ENCODE measurements at regions of chr2 and their contacts with region 1.

Region 1: DNA sequence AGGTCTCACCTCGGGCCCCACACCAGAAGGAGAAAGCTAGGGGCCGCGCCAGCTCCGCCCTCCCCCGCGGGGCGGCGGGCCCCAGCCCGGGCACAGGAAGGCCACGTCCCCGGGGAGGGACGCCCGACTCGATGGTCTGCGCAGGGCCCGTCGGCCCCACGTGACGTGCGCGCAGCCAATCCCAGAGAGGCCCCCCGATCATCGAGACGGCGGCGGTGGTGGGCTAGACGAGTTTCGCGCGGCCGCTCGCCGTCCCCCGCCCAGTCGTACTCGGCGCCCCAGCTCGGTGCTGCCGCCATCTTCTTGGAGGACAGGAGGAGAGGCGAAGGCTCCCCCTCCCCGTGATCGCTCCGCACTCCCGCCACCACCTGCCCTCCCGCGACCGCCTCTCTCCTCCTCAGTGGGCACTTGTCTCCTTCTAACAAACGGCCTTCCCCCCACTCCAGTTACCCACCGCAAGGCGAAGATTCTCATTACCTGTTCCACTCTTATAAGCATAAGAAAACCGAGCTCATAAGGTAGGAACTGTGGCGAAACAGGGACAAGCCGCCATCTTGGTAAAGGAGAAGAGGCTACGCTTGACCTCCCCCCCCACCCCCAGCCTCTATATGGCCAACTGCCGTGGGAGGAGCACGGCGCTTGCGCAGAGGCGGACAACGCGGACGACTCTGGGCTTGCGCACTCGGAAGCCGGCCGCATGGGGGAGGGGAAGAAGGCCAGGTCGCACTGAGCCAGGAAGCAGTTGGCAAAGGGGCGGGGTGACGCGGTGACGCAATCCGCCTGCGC is at the start of gene HDLBP:
- DNase-seq: peak; percentile 100
- H3K4me3 ChIP-seq: peak within 1 kb of the TSS; percentile 87
- H3K4me3 Mint-ChIP-seq: peak within 1 kb of the TSS; percentile 94 to 100 (median 98)
- H3K27ac ChIP-seq: peak within 1 kb of the TSS; percentile 96
- H3K27ac Mint-ChIP-seq: peak within 1 kb of the TSS; percentile 98 to 100 (median 99)
- H3K4me1 ChIP-seq: peaks cover 82% of the 10 kb centered on the region
- H3K4me1 Mint-ChIP-seq: peaks cover 54 to 92% (median 70%) of the 10 kb centered on the region in 4 donors
- H3K27me3 ChIP-seq: no peaks in the 10 kb centered on the region
- H3K27me3 Mint-ChIP-seq: peaks cover 0 to 1% of the 10 kb centered on the region in 2 donors
- total RNA-seq, gene HDLBP: 166 to 183 TPM

Region 2: DNA sequence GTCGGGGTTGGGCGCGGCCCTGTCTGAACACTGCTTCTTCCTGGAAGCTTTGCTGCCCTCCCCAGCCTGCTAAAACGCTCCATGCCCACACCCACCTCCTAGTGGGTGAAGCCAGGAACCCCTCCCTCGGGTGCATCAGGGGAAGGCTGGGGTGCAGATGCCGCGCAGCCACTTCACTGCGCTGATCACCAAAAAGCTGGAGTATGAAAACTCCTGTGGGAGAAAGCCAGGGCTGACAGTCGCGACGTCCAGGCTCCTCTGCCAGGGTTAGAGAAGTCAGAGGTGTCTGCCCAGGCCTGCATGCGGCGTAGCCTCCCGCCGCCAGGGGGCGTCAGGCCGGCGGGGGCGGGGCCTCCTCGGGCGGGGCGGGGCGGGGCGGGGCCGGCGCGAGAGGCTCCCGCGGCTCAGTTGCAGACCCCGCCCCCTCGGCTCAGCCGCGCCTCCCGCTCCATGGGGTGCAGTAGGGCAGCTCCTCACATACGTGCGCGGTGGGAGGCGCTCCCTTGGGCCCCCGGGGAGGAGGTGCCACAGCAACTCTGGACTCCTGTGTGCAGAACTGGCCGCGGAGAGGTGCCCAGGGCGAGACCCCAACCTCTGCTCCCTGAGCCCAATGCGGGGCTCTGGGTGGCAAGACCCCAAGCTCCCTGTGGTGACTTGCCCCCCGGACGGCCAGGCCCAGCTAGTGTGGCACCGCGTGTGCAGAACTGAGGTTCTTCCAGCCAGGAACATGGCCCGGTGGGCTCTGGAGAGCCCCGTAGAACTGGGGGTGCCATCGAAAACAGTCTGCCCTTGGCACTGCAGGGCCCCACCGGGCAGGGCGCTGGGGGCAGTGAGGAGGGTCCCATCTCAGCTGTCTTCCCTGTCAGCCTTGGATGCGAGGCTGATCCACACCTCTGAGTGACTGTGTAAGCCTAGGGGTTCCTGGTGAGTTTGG is 748.8 kb before region 1 on chr2:
- CTCF ChIA-PET with region 1: no interaction called
- POLR2A ChIA-PET with region 1: interaction called, 15 read pairs
- intact Hi-C with region 1: loop called (anchors 10 kb)
- DNase-seq: peak; percentile 91 to 96 (median 92)
- H3K4me3 ChIP-seq: peak overlapping the region; percentile 79 to 87
- H3K4me3 Mint-ChIP-seq: peak overlapping the region; percentile 90 to 98 (median 94)
- H3K27ac ChIP-seq: peak overlapping the region; percentile 89
- H3K27ac Mint-ChIP-seq: peak overlapping the region; percentile 98 to 99 (median 99)
- H3K4me1 ChIP-seq: peaks cover 86% of the 10 kb centered on the region
- H3K4me1 Mint-ChIP-seq: peaks cover 46 to 89% (median 69%) of the 10 kb centered on the region in 4 donors
- H3K27me3 ChIP-seq: no peaks in the 10 kb centered on the region
- H3K27me3 Mint-ChIP-seq: no peaks in the 10 kb centered on the region

Region 3: GRCh38 chr2:240998120-240998994 is 316.9 kb before region 1 on chr2 and contains the start of gene SNED1:
- CTCF ChIA-PET with region 1: no interaction called
- POLR2A ChIA-PET with region 1: no interaction called
- intact Hi-C with region 1: no loop called
- DNase-seq: peak; percentile 12 to 56 (median 40)
- H3K4me3 ChIP-seq: no peak within 1 kb of the TSS
- H3K4me3 Mint-ChIP-seq: peak within 1 kb of the TSS in 7 of 8 donors; percentile 55 to 85 (median 71)
- H3K27ac ChIP-seq: no peak within 1 kb of the TSS
- H3K27ac Mint-ChIP-seq: peak within 1 kb of the TSS in 3 of 7 donors; percentile 55 to 93 (median 80)
- H3K4me1 ChIP-seq: no peaks in the 10 kb centered on the region
- H3K4me1 Mint-ChIP-seq: peaks cover 3 to 20% (median 5%) of the 10 kb centered on the region in 4 donors
- H3K27me3 ChIP-seq: peaks cover 7% of the 10 kb centered on the region
- H3K27me3 Mint-ChIP-seq: peaks cover 14 to 16% of the 10 kb centered on the region in 2 donors
- total RNA-seq, gene SNED1: 85.2 to 90.1 TPM

Region 4: GRCh38 chr2:241110607-241111439 is 204.5 kb before region 1 on chr2:
- CTCF ChIA-PET with region 1: no interaction called
- POLR2A ChIA-PET with region 1: interaction called, 31 read pairs
- intact Hi-C with region 1: no loop called
- DNase-seq: peak in 1 of 5 donors; percentile 33
- H3K4me3 ChIP-seq: peak overlapping the region; percentile 48 to 51
- H3K4me3 Mint-ChIP-seq: peak overlapping the region; percentile 89 to 98 (median 93)
- H3K27ac ChIP-seq: peak overlapping the region; percentile 64
- H3K27ac Mint-ChIP-seq: peak overlapping the region; percentile 93 to 99 (median 97)
- H3K4me1 ChIP-seq: peaks cover 60% of the 10 kb centered on the region
- H3K4me1 Mint-ChIP-seq: peaks cover 35 to 69% (median 53%) of the 10 kb centered on the region in 4 donors
- H3K27me3 ChIP-seq: no peaks in the 10 kb centered on the region
- H3K27me3 Mint-ChIP-seq: no peaks in the 10 kb centered on the region

Region 5: DNA sequence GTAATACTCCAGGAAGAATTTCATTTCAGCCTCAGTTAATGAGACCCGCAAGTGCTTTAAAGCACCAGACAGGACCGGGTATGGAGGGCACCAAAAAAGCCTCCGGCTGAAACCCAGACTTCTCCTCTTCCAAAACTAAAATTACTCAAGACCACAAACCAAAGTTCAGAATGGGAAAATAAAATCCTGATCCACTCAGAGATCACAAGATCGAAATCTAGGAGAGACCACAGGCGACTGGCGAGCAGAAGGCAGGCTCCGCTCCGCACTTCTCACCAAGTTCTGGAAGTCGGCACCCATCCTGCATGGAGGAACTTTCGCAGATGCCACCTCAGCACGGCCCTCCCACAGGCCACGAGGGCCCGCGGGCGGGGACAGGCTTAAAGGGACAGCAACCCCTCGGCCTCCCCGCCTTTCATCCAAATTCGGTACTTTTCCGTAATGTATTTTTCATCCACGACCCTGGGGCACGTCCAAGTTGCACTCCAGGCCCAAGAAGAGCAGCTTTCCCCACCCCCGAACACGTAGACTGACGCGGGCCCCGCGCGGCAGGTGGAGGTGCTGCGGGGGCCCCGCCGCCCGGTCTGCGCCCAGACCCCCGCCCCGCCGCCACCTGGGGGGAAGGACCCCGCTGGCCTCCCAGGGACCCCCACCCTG is 43.5 kb before region 1 on chr2:
- CTCF ChIA-PET with region 1: no interaction called
- POLR2A ChIA-PET with region 1: interaction called, 12 read pairs
- intact Hi-C with region 1: loop called (anchors 1 kb)
- DNase-seq: peak; percentile 44 to 72 (median 50)
- H3K4me3 ChIP-seq: peak overlapping the region in 1 of 2 donors; percentile 63
- H3K4me3 Mint-ChIP-seq: peak overlapping the region; percentile 92 to 97 (median 94)
- H3K27ac ChIP-seq: peak overlapping the region; percentile 58
- H3K27ac Mint-ChIP-seq: peak overlapping the region; percentile 39 to 97 (median 93)
- H3K4me1 ChIP-seq: peaks cover 22% of the 10 kb centered on the region
- H3K4me1 Mint-ChIP-seq: peaks cover 26 to 47% (median 38%) of the 10 kb centered on the region in 4 donors
- H3K27me3 ChIP-seq: no peaks in the 10 kb centered on the region
- H3K27me3 Mint-ChIP-seq: no peaks in the 10 kb centered on the region

Region 6: GRCh38 chr2:241355983-241356870 is 40.9 kb after region 1 on chr2 and contains the start of gene FARP2:
- CTCF ChIA-PET with region 1: no interaction called
- POLR2A ChIA-PET with region 1: interaction called, 5 read pairs
- intact Hi-C with region 1: loop called (anchors 1 kb)
- DNase-seq: peak; percentile 97 to 99 (median 98)
- H3K4me3 ChIP-seq: peak within 1 kb of the TSS; percentile 47 to 63
- H3K4me3 Mint-ChIP-seq: peak within 1 kb of the TSS; percentile 82 to 89 (median 86)
- H3K27ac ChIP-seq: peak within 1 kb of the TSS; percentile 57
- H3K27ac Mint-ChIP-seq: peak within 1 kb of the TSS; percentile 77 to 97 (median 93)
- H3K4me1 ChIP-seq: peaks cover 15% of the 10 kb centered on the region
- H3K4me1 Mint-ChIP-seq: peaks cover 6 to 26% (median 15%) of the 10 kb centered on the region in 4 donors
- H3K27me3 ChIP-seq: no peaks in the 10 kb centered on the region
- H3K27me3 Mint-ChIP-seq: no peaks in the 10 kb centered on the region
- total RNA-seq, gene FARP2: 17.2 to 21.8 TPM

Region 7: DNA sequence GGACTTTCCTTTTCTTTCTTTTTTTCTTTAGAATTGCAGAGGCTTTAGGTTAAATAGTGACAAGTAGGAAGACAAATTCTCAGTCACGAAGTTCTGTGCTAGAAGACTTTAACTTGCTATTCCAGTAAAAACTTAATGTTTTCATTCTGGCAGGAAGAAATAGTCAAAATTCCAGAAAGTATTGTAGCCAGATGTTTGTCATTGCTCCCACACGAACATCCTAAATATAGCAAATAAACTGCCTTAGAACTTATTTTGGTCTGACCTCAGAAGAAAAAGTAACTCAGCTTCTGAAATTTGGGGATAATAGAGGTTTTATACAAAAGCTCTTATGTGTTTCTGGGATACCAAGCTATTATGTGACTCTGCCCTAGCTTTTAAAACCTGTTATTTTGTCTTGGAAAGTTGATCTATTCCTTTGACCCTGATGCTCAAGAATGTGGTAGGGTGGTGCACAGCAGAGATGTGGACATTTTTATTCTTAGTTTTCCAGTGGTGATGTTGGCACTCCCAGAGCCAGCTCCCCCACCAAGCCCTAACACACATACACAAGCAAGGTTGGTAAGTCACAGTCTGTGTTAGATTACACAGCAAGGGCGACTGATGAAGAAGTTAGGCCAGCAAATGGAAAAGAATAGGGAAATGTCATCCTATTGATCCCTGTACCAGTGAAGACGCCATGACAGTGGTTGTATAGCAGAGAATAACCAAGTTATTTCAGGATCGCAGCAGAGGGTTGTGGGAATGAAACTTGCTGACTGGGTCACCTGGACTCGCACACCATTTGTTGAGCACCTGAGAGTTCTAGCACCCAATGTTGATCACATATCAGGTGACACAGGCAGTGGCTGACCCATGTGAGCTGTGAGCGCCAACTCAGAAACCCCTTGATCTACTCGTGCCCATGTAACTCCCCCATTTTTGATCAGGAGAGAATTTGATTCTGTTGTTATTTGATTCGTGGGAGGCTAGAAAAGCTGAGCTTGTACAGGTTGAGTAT is 64.5 kb after region 1 on chr2:
- CTCF ChIA-PET with region 1: no interaction called
- POLR2A ChIA-PET with region 1: no interaction called
- intact Hi-C with region 1: no loop called
- DNase-seq: no peak
- H3K4me3 ChIP-seq: no peak overlapping the region
- H3K4me3 Mint-ChIP-seq: no peak overlapping the region
- H3K27ac ChIP-seq: no peak overlapping the region
- H3K27ac Mint-ChIP-seq: no peak overlapping the region
- H3K4me1 ChIP-seq: no peaks in the 10 kb centered on the region
- H3K4me1 Mint-ChIP-seq: peaks cover 0 to 6% (median 1%) of the 10 kb centered on the region in 4 donors
- H3K27me3 ChIP-seq: no peaks in the 10 kb centered on the region
- H3K27me3 Mint-ChIP-seq: no peaks in the 10 kb centered on the region

Region 8: DNA sequence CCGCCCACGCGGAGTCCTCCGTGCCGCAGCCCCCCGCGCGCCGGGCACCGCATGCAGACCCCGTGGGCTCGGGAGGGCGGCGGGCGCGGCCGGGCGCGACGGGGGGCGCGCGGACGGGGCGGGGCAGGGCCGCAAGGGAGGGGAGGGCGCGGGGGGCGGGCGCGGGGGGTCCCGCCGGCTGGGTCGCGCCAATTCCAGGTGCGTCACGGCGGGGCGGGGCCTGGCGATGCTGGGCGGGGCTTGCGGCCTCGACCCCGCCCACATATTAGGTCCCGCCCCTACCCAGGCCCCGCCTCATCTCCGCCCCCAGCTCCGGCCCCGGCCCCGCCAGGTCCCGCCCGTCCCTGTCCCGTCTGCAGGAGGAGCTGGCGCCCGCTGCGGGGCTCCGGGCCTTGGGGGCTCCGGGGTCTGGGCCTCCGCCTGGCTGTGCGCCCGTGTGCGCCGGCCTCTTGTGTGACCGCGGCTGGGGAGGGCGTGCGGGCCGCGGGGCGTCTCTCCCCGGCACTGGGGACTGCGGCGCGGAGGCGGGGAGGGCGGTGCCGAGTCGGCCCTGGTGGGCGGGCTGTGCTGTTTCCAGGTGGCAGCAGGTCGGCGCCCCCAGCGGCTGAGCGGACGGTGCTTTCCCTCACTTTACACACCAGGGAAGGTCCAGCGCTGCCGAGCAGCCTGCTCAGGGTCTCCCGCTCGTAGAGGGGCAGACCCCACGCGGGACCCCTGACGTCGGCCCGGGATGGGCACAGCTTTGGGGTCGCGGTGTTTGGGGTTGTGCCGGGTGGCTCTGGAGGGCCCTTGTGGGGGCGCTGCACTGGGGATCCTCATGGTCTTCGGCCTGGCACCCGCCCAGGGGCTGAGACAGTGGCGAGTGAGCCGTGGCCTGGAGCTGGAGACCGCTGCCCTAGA is 387.1 kb after region 1 on chr2:
- CTCF ChIA-PET with region 1: no interaction called
- POLR2A ChIA-PET with region 1: interaction called, 5 read pairs
- intact Hi-C with region 1: loop called (anchors 1 kb)
- DNase-seq: peak; percentile 89 to 91 (median 89)
- H3K4me3 ChIP-seq: peak overlapping the region; percentile 61 to 72
- H3K4me3 Mint-ChIP-seq: peak overlapping the region; percentile 76 to 87 (median 83)
- H3K27ac ChIP-seq: peak overlapping the region; percentile 72
- H3K27ac Mint-ChIP-seq: peak overlapping the region in 6 of 7 donors; percentile 53 to 90 (median 86)
- H3K4me1 ChIP-seq: peaks cover 14% of the 10 kb centered on the region
- H3K4me1 Mint-ChIP-seq: peaks cover 12 to 41% (median 26%) of the 10 kb centered on the region in 4 donors
- H3K27me3 ChIP-seq: no peaks in the 10 kb centered on the region
- H3K27me3 Mint-ChIP-seq: no peaks in the 10 kb centered on the region